HepG2 (cell line): ENCODE measurements at regions of chr4 and their contacts with region 1.

Region 1: GRCh38 chr4:113901994-113902787 is 77.3 kb downstream of the ARSJ start:
- DNase-seq: peak; percentile 34
- ATAC-seq: peak; percentile 100
- H3K4me3 ChIP-seq: peak overlapping the region in 1 of 3 experiments; percentile 38; a peak in 1 of 6 replicates
- H3K27ac ChIP-seq: no peak overlapping the region
- H3K4me1 ChIP-seq: peaks cover 11% of the 10 kb centered on the region
- H3K27me3 ChIP-seq: no peaks in the 10 kb centered on the region; a peak in 1 of 5 replicates
- CTCF ChIP-seq: peak; percentile 57
- EP300 ChIP-seq: no peak
- POLR2A ChIP-seq: no peak
- RAD21 ChIP-seq: no peak

Region 2: DNA sequence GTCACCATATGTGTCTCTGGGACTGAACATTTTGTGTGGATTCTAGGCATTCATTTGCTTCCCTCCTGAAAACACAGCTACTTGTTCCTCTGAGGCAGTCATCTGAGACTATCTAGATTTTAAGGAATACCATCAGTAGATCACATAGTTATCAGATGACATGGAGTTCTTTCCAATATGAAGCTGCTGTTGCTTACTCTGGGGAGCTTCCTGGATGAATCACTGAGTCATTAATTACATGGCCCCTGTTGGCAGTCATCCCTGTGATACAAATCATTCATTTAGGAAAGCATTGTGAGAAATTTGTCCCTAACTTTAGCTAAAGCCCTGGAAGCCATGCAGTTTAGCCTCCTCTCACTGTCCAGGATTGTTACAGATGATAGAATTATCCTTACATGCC is 175.4 kb after region 1 on chr4:
- CTCF ChIA-PET with region 1: no interaction called
- POLR2A ChIA-PET with region 1: no interaction called
- in situ Hi-C with region 1: no loop called
- intact Hi-C with region 1: loop called (anchors 5 kb)
- DNase-seq: no peak
- ATAC-seq: no peak
- H3K4me3 ChIP-seq: no peak overlapping the region
- H3K27ac ChIP-seq: no peak overlapping the region
- H3K4me1 ChIP-seq: no peaks in the 10 kb centered on the region
- H3K27me3 ChIP-seq: no peaks in the 10 kb centered on the region
- CTCF ChIP-seq: no peak
- EP300 ChIP-seq: no peak
- POLR2A ChIP-seq: no peak
- RAD21 ChIP-seq: no peak

Region 3: GRCh38 chr4:114161809-114162208 is 259.6 kb after region 1 on chr4:
- CTCF ChIA-PET with region 1: no interaction called
- POLR2A ChIA-PET with region 1: no interaction called
- in situ Hi-C with region 1: no loop called
- intact Hi-C with region 1: no loop called
- DNase-seq: no peak
- ATAC-seq: peak; percentile 67; the same call in 2 of the 3 replicates
- H3K4me3 ChIP-seq: no peak overlapping the region
- H3K27ac ChIP-seq: no peak overlapping the region
- H3K4me1 ChIP-seq: no peaks in the 10 kb centered on the region
- H3K27me3 ChIP-seq: no peaks in the 10 kb centered on the region
- CTCF ChIP-seq: peak; percentile 20; the same call in 1 of the 2 replicates
- EP300 ChIP-seq: no peak
- POLR2A ChIP-seq: no peak
- RAD21 ChIP-seq: no peak

Region 4: DNA sequence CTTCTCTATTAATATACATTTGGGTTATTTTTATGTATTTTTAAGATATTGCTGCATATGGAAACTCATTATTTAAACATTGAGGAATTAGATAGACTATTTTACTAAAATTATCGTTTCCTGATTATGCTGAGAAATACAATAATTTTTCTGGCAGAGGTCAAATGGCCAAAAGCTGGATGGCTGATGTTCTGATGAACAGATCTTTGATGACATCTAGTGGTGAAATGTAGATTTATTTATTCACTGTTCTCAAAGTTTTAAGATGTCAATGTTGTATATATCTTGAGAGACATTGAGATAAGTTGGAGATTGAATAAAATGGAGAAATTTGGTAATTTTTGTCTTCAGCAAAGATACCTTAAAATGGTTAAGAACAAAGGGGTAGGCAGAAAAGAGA is 792.6 kb after region 1 on chr4:
- CTCF ChIA-PET with region 1: no interaction called
- POLR2A ChIA-PET with region 1: no interaction called
- in situ Hi-C with region 1: no loop called
- intact Hi-C with region 1: loop called (anchors 10 kb)
- DNase-seq: peak; percentile 12
- ATAC-seq: no peak
- H3K4me3 ChIP-seq: no peak overlapping the region
- H3K27ac ChIP-seq: no peak overlapping the region
- H3K4me1 ChIP-seq: no peaks in the 10 kb centered on the region
- H3K27me3 ChIP-seq: no peaks in the 10 kb centered on the region
- CTCF ChIP-seq: peak; percentile 57
- EP300 ChIP-seq: no peak
- POLR2A ChIP-seq: no peak
- RAD21 ChIP-seq: no peak